Prostate gland (tissue), 2 donors: ENCODE measurements at regions of chr6 and their contacts with region 1.

Region 1: GRCh38 chr6:70107852-70108629 is 194.8 kb downstream of the COL9A1 start:
- DNase-seq: no peak
- H3K4me3 ChIP-seq: no peak overlapping the region
- H3K27ac ChIP-seq: no peak overlapping the region
- H3K4me1 ChIP-seq: no peaks in the 10 kb centered on the region
- H3K27me3 ChIP-seq: no peaks in the 10 kb centered on the region
- CTCF ChIP-seq: peak in 3 of 4 experiments; percentile 42 to 66 (median 53)
- POLR2A ChIP-seq: no peak

Region 2: GRCh38 chr6:69732640-69733039 is 375.4 kb before region 1 on chr6:
- intact Hi-C with region 1: loop called (anchors 5 kb)
- DNase-seq: no peak
- H3K4me3 ChIP-seq: no peak overlapping the region
- H3K27ac ChIP-seq: no peak overlapping the region
- H3K4me1 ChIP-seq: no peaks in the 10 kb centered on the region
- H3K27me3 ChIP-seq: no peaks in the 10 kb centered on the region
- CTCF ChIP-seq: no peak
- POLR2A ChIP-seq: no peak

Region 3: GRCh38 chr6:69835414-69836179 is 272.4 kb before region 1 on chr6:
- intact Hi-C with region 1: loop called (anchors 2 kb)
- DNase-seq: peak; percentile 16
- H3K4me3 ChIP-seq: no peak overlapping the region
- H3K27ac ChIP-seq: no peak overlapping the region
- H3K4me1 ChIP-seq: no peaks in the 10 kb centered on the region
- H3K27me3 ChIP-seq: no peaks in the 10 kb centered on the region
- CTCF ChIP-seq: peak; percentile 10 to 73 (median 48)
- POLR2A ChIP-seq: no peak

Region 4: DNA sequence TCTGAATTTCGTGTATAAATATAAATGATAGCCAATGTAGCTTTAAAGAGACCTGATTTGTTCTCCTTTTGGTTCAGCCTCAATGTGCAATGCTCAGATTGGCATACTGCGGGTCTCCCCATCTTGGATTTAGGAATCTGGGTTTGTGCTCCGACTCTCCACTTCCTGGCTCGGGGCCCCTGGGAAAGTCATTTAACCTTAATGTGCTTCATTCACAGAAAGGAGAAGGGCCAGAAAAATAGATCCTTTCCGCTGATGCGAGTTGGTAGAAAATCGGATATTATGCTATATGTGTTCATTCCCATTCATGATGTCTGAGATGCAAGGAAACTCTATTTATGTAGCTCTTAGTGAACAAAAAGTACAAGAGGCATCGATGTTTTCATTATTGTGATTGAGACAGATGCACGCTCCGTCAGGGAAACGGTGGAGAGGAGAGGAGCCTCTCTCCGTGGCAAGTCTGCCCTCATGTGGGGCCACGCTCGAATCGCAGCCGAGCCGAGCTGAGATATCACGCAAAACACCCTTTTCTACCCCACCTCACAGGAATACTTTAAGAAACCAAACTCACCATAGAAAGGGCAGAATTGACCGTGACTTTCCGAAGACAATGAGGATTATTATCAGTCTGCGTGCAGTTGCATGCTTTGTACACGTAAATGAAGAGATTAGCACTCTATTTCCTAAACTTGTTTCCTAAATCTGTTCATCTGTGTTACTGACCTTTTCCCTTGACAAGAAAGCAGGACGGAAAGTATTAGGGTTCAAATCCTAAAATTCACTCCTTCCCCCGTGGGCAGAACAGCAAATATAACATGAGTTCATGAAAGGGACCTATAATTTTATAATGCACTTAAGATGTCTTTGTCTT is 58.3 kb after region 1 on chr6:
- intact Hi-C with region 1: loop called (anchors 10 kb)
- DNase-seq: peak; percentile 6
- H3K4me3 ChIP-seq: no peak overlapping the region
- H3K27ac ChIP-seq: no peak overlapping the region
- H3K4me1 ChIP-seq: no peaks in the 10 kb centered on the region
- H3K27me3 ChIP-seq: no peaks in the 10 kb centered on the region
- CTCF ChIP-seq: peak in 3 of 4 experiments; percentile 11 to 22 (median 12)
- POLR2A ChIP-seq: no peak